Adrenal gland (tissue), 19 donors: ENCODE measurements at regions of chr1 and their contacts with region 1.

Region 1: GRCh38 chr1:29793101-29793546 is 556.8 kb downstream of the PTPRU start:
- DNase-seq: peak; percentile 79 to 94 (median 85)
- H3K4me3 ChIP-seq: no peak overlapping the region
- H3K27ac ChIP-seq: no peak overlapping the region
- H3K4me1 ChIP-seq: no peaks in the 10 kb centered on the region
- H3K27me3 ChIP-seq: no peaks in the 10 kb centered on the region
- CTCF ChIP-seq: peak; percentile 57 to 82 (median 76)
- POLR2A ChIP-seq: no peak

Region 2: DNA sequence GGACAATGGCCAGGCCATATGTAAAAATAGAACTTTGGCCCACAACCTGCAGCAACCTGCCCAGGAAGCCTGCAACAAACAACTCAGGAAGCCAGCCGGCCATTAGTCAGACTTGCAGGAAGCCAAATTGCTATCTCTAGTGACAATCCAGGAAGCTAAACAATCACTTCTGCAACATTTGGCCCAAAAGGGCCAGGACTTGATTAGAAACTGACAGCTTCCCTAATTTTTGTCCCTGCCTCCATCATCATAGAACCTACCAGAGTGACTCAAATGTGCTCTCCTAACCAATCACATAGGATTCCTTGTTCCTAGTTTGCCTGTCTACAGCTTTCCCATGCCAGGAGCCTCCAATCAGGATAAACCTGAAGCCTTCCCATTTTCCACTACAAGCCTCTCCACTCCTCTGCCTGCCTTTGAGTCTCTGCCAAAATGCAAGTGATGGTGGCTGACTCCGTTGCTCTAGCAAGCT is 82.5 kb after region 1 on chr1:
- intact Hi-C with region 1: no loop called
- DNase-seq: peak in 2 of 7 donors; percentile 5 to 26
- H3K4me3 ChIP-seq: no peak overlapping the region
- H3K27ac ChIP-seq: no peak overlapping the region
- H3K4me1 ChIP-seq: no peaks in the 10 kb centered on the region
- H3K27me3 ChIP-seq: peaks cover 11% of the 10 kb centered on the region
- CTCF ChIP-seq: no peak
- POLR2A ChIP-seq: no peak

Region 3: GRCh38 chr1:30085811-30086770 is 293.0 kb after region 1 on chr1:
- intact Hi-C with region 1: loop called (anchors 5 to 10 kb)
- DNase-seq: peak in 6 of 7 donors; percentile 28 to 75 (median 43)
- H3K4me3 ChIP-seq: no peak overlapping the region
- H3K27ac ChIP-seq: no peak overlapping the region
- H3K4me1 ChIP-seq: peaks cover 8 to 13% of the 10 kb centered on the region in 2 donors
- H3K27me3 ChIP-seq: peaks cover 5% of the 10 kb centered on the region
- CTCF ChIP-seq: peak; percentile 38 to 78 (median 61)
- POLR2A ChIP-seq: no peak

Region 4: GRCh38 chr1:30111431-30111830 is 318.3 kb after region 1 on chr1:
- intact Hi-C with region 1: loop called in 1 of 2 experiments (anchors 5 kb)
- DNase-seq: peak in 6 of 7 donors; percentile 35 to 79 (median 44)
- H3K4me3 ChIP-seq: no peak overlapping the region
- H3K27ac ChIP-seq: no peak overlapping the region
- H3K4me1 ChIP-seq: no peaks in the 10 kb centered on the region
- H3K27me3 ChIP-seq: peaks cover 10% of the 10 kb centered on the region
- CTCF ChIP-seq: peak in 5 of 6 experiments; percentile 21 to 57 (median 49)
- POLR2A ChIP-seq: no peak

Region 5: GRCh38 chr1:30379684-30380624 is 586.8 kb after region 1 on chr1:
- intact Hi-C with region 1: loop called in 1 of 2 experiments (anchors 10 kb)
- DNase-seq: peak; percentile 41 to 75 (median 66)
- H3K4me3 ChIP-seq: no peak overlapping the region
- H3K27ac ChIP-seq: no peak overlapping the region
- H3K4me1 ChIP-seq: no peaks in the 10 kb centered on the region
- H3K27me3 ChIP-seq: peaks cover 4% of the 10 kb centered on the region
- CTCF ChIP-seq: peak; percentile 73 to 90 (median 80)
- POLR2A ChIP-seq: no peak

Region 6: DNA sequence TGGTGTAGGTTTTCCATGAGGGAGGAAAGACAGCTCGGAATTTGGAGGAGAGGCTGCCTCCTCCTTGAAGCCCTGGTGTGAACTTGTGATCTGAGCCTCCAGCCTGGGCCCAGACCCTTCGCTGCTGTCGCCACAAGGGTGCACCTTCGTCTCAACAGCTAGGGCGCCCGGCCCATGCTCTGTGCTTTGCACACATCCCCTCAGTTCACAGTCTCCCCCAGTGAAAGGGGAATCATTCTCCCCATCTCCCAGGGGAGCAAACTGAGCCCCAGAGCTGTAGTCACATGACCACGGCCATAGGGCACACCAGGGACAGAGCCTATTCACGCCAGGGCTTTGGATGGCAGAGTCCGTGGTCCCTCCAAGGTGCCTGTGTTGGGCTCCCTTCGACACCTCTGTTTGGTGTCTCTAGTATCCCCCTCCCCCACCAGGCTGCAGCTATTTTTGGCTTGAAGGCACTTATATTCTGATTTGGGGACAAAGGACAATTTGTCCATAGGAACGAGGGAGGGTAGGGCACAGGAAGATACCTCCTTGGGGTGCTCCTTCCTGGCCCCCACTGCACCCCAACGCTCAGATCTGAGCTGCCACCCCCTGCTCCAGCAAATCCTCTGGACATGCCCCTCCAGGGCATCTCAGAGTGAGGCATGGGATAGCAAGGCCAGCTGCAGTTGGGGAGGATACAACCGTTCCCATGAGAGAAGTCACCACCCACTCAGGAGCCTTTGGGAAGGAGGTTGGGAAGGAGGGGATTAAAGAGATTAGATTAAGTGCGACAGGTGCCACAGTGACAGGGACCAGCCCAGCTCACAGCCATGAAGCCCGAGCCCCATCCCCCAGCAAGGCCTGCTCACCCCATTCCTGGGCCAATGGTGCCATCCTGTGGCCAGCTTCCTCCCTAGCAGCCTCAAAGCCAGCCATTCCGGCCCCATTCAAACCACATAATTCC is 914.6 kb after region 1 on chr1:
- intact Hi-C with region 1: loop called in 1 of 2 experiments (anchors 10 kb)
- DNase-seq: peak; percentile 68 to 91 (median 80)
- H3K4me3 ChIP-seq: no peak overlapping the region
- H3K27ac ChIP-seq: no peak overlapping the region
- H3K4me1 ChIP-seq: peaks cover 0 to 5% of the 10 kb centered on the region in 2 donors
- H3K27me3 ChIP-seq: no peaks in the 10 kb centered on the region
- CTCF ChIP-seq: peak; percentile 67 to 98 (median 94)
- POLR2A ChIP-seq: no peak